Caco-2 (cell line): ENCODE measurements at regions of chr6 and their contacts with region 1.

Region 1: GRCh38 chr6:90701146-90701781 is 114.4 kb upstream of the MAP3K7 start:
- DNase-seq: peak in 1 of 2 experiments; percentile 23
- H3K4me3 ChIP-seq: no peak overlapping the region
- H3K4me3 Mint-ChIP-seq: no peak overlapping the region
- H3K27ac Mint-ChIP-seq: no peak overlapping the region
- H3K4me1 ChIP-seq: no peaks in the 10 kb centered on the region
- H3K4me1 Mint-ChIP-seq: no peaks in the 10 kb centered on the region
- H3K27me3 ChIP-seq: no peaks in the 10 kb centered on the region
- H3K27me3 Mint-ChIP-seq: peaks cover 4% of the 10 kb centered on the region
- CTCF ChIP-seq: no peak

Region 2: GRCh38 chr6:90068264-90068663 is 633.0 kb before region 1 on chr6:
- CTCF ChIA-PET with region 1: no interaction called
- POLR2A ChIA-PET with region 1: no interaction called
- intact Hi-C with region 1: no loop called
- DNase-seq: no peak
- H3K4me3 ChIP-seq: no peak overlapping the region
- H3K4me3 Mint-ChIP-seq: no peak overlapping the region
- H3K27ac Mint-ChIP-seq: no peak overlapping the region
- H3K4me1 ChIP-seq: no peaks in the 10 kb centered on the region
- H3K4me1 Mint-ChIP-seq: no peaks in the 10 kb centered on the region
- H3K27me3 ChIP-seq: no peaks in the 10 kb centered on the region
- H3K27me3 Mint-ChIP-seq: peaks cover 25% of the 10 kb centered on the region
- CTCF ChIP-seq: no peak

Region 3: GRCh38 chr6:90559931-90560330 is 141.3 kb before region 1 on chr6:
- CTCF ChIA-PET with region 1: no interaction called
- POLR2A ChIA-PET with region 1: no interaction called
- intact Hi-C with region 1: no loop called
- DNase-seq: no peak
- H3K4me3 ChIP-seq: no peak overlapping the region
- H3K4me3 Mint-ChIP-seq: no peak overlapping the region
- H3K27ac Mint-ChIP-seq: no peak overlapping the region
- H3K4me1 ChIP-seq: no peaks in the 10 kb centered on the region
- H3K4me1 Mint-ChIP-seq: no peaks in the 10 kb centered on the region
- H3K27me3 ChIP-seq: no peaks in the 10 kb centered on the region
- H3K27me3 Mint-ChIP-seq: no peaks in the 10 kb centered on the region
- CTCF ChIP-seq: no peak

Region 4: DNA sequence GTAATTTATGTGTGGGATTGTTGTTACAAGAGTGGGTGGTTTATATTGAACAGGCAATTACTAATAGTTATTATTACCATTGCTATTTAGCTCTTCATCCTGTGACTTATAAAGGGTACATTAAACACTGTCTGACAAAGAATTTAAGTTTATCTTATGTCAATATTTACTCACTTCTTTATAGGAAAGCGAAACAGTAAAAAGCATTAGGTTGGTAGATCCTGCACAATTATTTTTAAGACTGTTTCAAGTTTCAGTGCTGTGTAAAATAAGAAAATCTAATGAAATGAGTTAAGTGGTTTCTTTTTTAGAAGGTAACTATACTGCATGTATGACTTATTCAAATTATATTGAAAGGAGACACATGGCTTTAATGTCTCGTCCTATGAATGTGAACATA is 21.4 kb after region 1 on chr6:
- CTCF ChIA-PET with region 1: no interaction called
- POLR2A ChIA-PET with region 1: no interaction called
- intact Hi-C with region 1: loop called (anchors 1 kb)
- DNase-seq: no peak
- H3K4me3 ChIP-seq: no peak overlapping the region
- H3K4me3 Mint-ChIP-seq: no peak overlapping the region
- H3K27ac Mint-ChIP-seq: no peak overlapping the region
- H3K4me1 ChIP-seq: peaks cover 12% of the 10 kb centered on the region
- H3K4me1 Mint-ChIP-seq: peaks cover 16% of the 10 kb centered on the region
- H3K27me3 ChIP-seq: no peaks in the 10 kb centered on the region
- H3K27me3 Mint-ChIP-seq: peaks cover 3% of the 10 kb centered on the region
- CTCF ChIP-seq: no peak

Region 5: GRCh38 chr6:90753820-90754643 is 52.8 kb after region 1 on chr6:
- CTCF ChIA-PET with region 1: no interaction called
- POLR2A ChIA-PET with region 1: no interaction called
- intact Hi-C with region 1: loop called (anchors 5 kb)
- DNase-seq: peak in 1 of 2 experiments; percentile 21
- H3K4me3 ChIP-seq: no peak overlapping the region
- H3K4me3 Mint-ChIP-seq: peak overlapping the region; percentile 58
- H3K27ac Mint-ChIP-seq: no peak overlapping the region
- H3K4me1 ChIP-seq: peaks cover 6% of the 10 kb centered on the region; the same call in 1 of the 2 replicates
- H3K4me1 Mint-ChIP-seq: peaks cover 14% of the 10 kb centered on the region
- H3K27me3 ChIP-seq: no peaks in the 10 kb centered on the region
- H3K27me3 Mint-ChIP-seq: no peaks in the 10 kb centered on the region
- CTCF ChIP-seq: no peak

Region 6: DNA sequence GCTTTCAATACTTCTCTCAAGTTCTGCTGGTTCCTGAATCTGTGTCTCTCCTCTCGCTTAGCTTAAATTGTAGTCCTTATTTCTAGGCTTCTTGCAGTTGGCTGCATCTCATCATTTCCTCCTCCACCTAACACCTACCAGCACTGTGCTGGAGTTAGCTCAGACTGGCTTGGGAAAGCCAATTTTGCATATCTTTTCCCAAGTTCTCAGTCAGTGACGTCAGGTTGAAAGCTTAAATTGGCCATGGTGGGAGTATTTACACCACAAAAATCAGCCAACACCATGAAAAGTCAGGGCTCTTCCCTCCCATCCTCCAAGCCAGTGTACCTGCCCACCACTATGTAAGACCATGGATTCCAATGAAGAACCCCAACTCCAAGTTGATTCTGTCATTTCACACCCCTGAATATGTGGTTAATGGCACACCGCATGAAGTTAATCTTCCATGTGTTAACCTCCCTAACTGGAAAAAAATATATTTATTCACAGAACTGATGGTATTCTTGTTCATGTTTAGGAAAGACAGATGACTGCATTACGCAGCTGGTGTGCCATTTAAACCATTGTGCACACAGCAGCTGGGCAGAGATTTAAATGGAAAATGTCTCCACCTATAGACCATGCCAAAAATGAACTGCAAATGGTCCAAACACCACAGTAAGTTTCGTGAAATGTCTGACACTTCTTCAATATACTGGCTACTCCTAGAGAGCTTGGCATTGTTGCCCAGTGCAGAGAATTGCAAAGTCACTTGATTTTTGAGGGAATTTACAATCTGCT is 159.7 kb after region 1 on chr6:
- CTCF ChIA-PET with region 1: interaction called, 3 read pairs
- POLR2A ChIA-PET with region 1: no interaction called
- intact Hi-C with region 1: loop called (anchors 5 kb)
- DNase-seq: peak in 1 of 2 experiments; percentile 8
- H3K4me3 ChIP-seq: no peak overlapping the region
- H3K4me3 Mint-ChIP-seq: no peak overlapping the region
- H3K27ac Mint-ChIP-seq: no peak overlapping the region
- H3K4me1 ChIP-seq: no peaks in the 10 kb centered on the region
- H3K4me1 Mint-ChIP-seq: no peaks in the 10 kb centered on the region
- H3K27me3 ChIP-seq: no peaks in the 10 kb centered on the region
- H3K27me3 Mint-ChIP-seq: no peaks in the 10 kb centered on the region
- CTCF ChIP-seq: peak; percentile 16 to 35